Panc1 (cell line): ENCODE measurements at regions of chr6 and their contacts with region 1.

Region 1: GRCh38 chr6:23465912-23466311 is 660.1 kb upstream of the NRSN1 start:
- DNase-seq: no peak
- ATAC-seq: no peak
- H3K4me3 ChIP-seq: no peak overlapping the region
- H3K27ac ChIP-seq: no peak overlapping the region
- H3K4me1 ChIP-seq: no peaks in the 10 kb centered on the region
- H3K27me3 ChIP-seq: no peaks in the 10 kb centered on the region
- CTCF ChIP-seq: no peak

Region 2: GRCh38 chr6:23441808-23442461 is 24.0 kb before region 1 on chr6:
- CTCF ChIA-PET with region 1: no interaction called
- POLR2A ChIA-PET with region 1: interaction called, 10 read pairs
- in situ Hi-C with region 1: no loop called
- intact Hi-C with region 1: no loop called
- DNase-seq: no peak
- ATAC-seq: no peak
- H3K4me3 ChIP-seq: no peak overlapping the region
- H3K27ac ChIP-seq: no peak overlapping the region
- H3K4me1 ChIP-seq: no peaks in the 10 kb centered on the region
- H3K27me3 ChIP-seq: no peaks in the 10 kb centered on the region
- CTCF ChIP-seq: no peak

Region 3: GRCh38 chr6:23841116-23841515 is 375.2 kb after region 1 on chr6:
- CTCF ChIA-PET with region 1: no interaction called
- POLR2A ChIA-PET with region 1: no interaction called
- in situ Hi-C with region 1: no loop called
- intact Hi-C with region 1: no loop called
- DNase-seq: no peak
- ATAC-seq: no peak
- H3K4me3 ChIP-seq: no peak overlapping the region
- H3K27ac ChIP-seq: no peak overlapping the region
- H3K4me1 ChIP-seq: no peaks in the 10 kb centered on the region
- H3K27me3 ChIP-seq: no peaks in the 10 kb centered on the region
- CTCF ChIP-seq: no peak